Adrenal gland (tissue), 19 donors: ENCODE measurements at regions of chr17 and their contacts with region 1.

Region 1: DNA sequence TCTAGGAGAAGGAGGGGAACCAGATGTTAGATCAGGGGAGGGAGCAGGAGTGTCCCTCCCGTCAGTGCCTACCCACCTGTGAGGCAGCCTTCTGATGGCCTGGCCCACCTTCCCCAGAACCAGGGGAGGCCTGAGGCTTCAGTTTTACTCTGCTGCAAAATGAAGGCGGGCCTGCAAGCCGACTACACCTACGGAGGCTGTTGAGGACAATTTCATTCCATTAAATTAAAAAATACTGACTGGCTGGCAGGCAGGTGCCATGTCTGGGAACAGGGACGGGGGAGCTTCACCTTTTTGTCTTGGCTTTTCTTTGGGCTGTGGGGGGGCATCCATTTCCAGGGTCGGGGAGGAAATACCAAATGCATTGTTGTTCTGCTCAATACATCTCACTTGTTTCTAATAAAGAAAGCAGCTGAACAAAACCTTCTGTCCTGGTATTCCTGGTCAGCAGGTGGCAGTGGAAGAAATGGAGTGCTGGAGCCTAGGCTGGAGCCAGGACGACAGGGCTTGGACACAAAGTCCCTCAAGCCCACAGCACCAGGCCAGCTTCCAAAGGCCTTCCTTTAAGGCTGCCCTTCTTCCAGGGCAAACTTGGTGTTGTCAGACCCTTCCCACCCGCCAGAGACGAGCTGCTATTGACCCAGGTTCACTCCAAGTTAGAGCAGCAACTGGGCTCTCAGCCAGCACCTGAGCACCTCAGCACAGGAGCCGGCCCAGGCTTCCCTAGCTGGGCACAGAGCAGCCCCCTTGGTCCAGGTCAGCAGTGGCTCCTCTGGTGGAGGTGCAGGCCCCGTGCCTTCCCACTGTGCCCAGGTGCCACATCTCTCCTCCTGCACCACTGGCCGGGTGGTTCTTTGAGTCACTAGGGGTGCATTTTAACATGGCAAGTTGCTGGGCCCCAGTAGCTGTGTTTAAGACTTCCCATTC is 23.5 kb downstream of the PLCD3 start:
- DNase-seq: peak in 1 of 7 donors; percentile 49
- H3K4me3 ChIP-seq: no peak overlapping the region
- H3K27ac ChIP-seq: peak overlapping the region in 2 of 5 donors; percentile 11 to 79
- H3K4me1 ChIP-seq: peaks cover 26% of the 10 kb centered on the region in 2 donors
- H3K27me3 ChIP-seq: no peaks in the 10 kb centered on the region
- CTCF ChIP-seq: no peak
- POLR2A ChIP-seq: no peak

Region 2: GRCh38 chr17:45006927-45007461 is 101.9 kb before region 1 on chr17:
- intact Hi-C with region 1: no loop called
- DNase-seq: no peak
- H3K4me3 ChIP-seq: no peak overlapping the region
- H3K27ac ChIP-seq: no peak overlapping the region
- H3K4me1 ChIP-seq: no peaks in the 10 kb centered on the region
- H3K27me3 ChIP-seq: no peaks in the 10 kb centered on the region
- CTCF ChIP-seq: no peak
- POLR2A ChIP-seq: no peak

Region 3: DNA sequence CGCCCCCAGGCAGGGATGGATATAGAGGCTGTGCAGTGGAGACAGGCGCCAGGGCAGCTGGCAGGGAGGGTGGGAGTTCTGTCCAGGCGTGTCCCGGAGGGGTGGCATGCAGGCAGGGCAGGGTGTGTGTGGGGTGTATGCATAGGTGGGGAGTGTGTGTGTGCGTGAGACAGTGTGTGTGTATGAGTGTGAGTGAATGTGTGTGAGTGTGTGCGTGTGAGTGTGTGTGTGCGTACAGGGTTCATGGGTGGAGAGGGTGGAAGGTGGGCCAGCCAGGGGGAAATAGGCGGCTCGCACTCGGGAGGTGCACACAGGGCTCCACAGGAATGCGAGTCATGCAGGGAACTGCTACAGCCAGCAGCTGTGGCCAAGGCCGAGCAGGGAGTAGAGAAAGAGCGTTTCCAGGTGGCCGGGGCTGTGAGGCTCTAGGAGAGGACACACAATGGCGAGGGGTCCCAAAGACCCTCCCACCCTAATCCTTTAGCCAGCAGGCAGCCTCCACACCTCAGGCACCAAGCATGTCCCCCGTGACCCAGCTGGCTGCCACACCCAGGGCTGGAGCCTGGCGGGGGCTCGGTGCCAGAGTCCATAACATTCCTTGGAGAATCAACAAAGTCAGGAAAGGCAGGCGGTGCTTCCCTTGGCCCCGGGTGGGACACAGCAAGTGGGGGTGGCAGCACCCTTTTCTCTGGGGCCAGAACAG is 18.9 kb after region 1 on chr17:
- intact Hi-C with region 1: loop called in 1 of 2 experiments (anchors 2 kb)
- DNase-seq: peak in 6 of 7 donors; percentile 71 to 79 (median 74)
- H3K4me3 ChIP-seq: no peak overlapping the region
- H3K27ac ChIP-seq: peak overlapping the region; percentile 80 to 98 (median 87)
- H3K4me1 ChIP-seq: peaks cover 53 to 54% of the 10 kb centered on the region in 2 donors
- H3K27me3 ChIP-seq: no peaks in the 10 kb centered on the region
- CTCF ChIP-seq: peak in 1 of 6 experiments; percentile 4
- POLR2A ChIP-seq: peak in 1 of 2 donors; percentile 42